ENCODE measurements at regions of chr11 and their contacts with region 1.

Region 1: GRCh38 chr11:75191330-75191717 is 40.4 kb downstream of the SLCO2B1 start:
- DNase-seq: no peak
- ATAC-seq: peak; percentile 73
- H3K4me3 ChIP-seq: no peak overlapping the region
- H3K27ac ChIP-seq: peak overlapping the region; percentile 63
- H3K4me1 ChIP-seq: peaks cover 26% of the 10 kb centered on the region
- H3K27me3 ChIP-seq: no peaks in the 10 kb centered on the region
- CTCF ChIP-seq: no peak
- EP300 ChIP-seq: no peak
- POLR2A ChIP-seq: no peak
- RAD21 ChIP-seq: no peak

Region 2: DNA sequence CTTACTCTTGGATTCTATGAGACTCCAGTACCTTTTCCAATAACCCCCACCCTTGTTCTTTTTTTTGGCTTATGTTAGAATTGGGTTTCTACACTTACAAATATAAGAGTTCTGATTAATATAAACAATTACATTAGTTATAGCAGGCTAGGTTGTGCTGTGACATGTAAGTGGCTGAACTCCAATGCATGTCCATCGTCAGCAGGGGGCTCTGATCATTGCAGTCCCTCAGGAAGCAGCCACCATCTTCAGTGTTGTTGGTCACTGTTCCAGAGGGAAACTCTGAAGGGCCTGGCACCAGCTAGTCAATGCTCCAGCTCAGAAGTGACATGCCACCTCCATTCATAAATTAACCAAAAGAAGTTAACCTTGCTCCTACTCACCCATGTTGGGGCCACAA is 703.4 kb before region 1 on chr11:
- CTCF ChIA-PET with region 1: no interaction called
- POLR2A ChIA-PET with region 1: no interaction called
- in situ Hi-C with region 1: no loop called
- intact Hi-C with region 1: no loop called
- DNase-seq: peak; percentile 54
- ATAC-seq: peak; percentile 94
- H3K4me3 ChIP-seq: no peak overlapping the region
- H3K27ac ChIP-seq: no peak overlapping the region
- H3K4me1 ChIP-seq: peaks cover 22% of the 10 kb centered on the region
- H3K27me3 ChIP-seq: no peaks in the 10 kb centered on the region
- CTCF ChIP-seq: peak; percentile 66
- EP300 ChIP-seq: no peak
- POLR2A ChIP-seq: no peak
- RAD21 ChIP-seq: 0 out of 2 replicates have a peak, but pooled peaks have one; percentile 40

Region 3: DNA sequence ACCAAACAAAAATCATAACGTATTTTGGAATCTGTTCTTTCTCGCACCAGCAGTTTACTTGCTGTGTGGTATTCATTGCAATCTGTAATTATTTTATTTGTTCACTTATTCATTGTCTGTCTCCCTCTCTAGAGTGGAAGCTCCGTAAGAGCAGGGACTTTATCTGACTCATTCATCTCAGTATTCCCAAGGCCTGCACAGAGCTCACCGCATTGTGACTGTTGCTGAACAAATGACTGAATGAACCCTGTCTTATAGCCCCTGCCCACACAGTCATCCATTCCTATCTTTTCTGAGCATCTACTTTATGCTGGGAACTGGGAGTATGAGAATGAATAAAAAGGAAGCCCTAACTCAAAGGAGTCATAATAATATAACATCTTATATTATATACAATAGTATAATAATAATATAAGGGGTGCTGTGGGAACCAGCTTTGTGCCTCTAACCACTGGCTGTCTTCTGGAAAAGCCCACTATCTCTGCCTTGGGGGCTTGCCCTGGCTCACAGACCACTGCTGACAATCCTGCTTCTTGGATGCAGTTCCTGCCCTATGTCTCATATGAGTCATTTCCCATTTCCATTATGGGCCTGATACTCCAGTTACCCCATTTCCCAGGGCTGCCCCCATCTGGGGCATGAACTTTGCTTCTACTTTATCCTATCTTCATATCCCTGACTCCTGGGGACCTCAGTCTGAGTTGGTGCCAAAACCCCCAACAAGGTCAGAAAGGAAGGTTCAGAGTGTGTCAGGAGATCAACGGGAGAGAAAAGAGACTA is 253.4 kb before region 1 on chr11:
- CTCF ChIA-PET with region 1: no interaction called
- POLR2A ChIA-PET with region 1: no interaction called
- in situ Hi-C with region 1: no loop called
- intact Hi-C with region 1: no loop called
- DNase-seq: no peak
- ATAC-seq: no peak
- H3K4me3 ChIP-seq: no peak overlapping the region
- H3K27ac ChIP-seq: no peak overlapping the region
- H3K4me1 ChIP-seq: no peaks in the 10 kb centered on the region
- H3K27me3 ChIP-seq: no peaks in the 10 kb centered on the region
- CTCF ChIP-seq: no peak
- EP300 ChIP-seq: no peak
- POLR2A ChIP-seq: no peak
- RAD21 ChIP-seq: no peak

Region 4: DNA sequence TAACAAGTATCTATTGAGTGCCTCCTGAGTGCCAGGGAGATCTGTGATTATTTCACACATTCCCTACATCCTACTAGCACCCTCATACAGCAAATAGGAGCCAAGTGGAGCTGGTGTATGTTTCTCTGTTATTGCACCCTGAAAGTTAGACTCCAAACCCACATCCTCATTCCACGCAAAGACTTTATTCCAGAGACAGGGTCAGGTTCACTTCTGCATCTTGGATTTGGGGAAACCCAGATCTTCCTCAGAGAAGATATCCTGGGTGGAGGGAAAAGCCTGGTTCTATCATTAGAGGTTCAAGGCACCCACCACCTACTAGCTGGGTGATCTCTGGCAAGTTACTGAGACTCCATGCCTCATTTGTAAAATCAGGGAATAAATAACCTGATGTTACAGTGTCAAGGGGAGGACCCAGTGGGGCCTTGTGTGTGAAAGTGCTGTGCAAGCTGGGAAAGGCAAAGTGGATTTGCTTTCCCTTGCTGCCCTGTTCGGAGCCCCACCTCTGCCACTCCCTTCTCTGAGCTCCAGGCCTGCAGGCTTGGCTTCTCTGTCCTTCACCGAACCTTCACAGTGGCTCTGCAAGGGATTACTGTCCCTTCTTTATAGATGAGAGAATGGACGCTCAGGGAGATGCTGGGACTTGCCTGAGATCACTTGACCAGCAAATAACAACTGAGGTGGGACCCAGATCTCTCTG is 41.4 kb before region 1 on chr11:
- CTCF ChIA-PET with region 1: no interaction called
- POLR2A ChIA-PET with region 1: no interaction called
- in situ Hi-C with region 1: no loop called
- intact Hi-C with region 1: no loop called
- DNase-seq: no peak
- ATAC-seq: no peak
- H3K4me3 ChIP-seq: no peak overlapping the region
- H3K27ac ChIP-seq: no peak overlapping the region
- H3K4me1 ChIP-seq: peaks cover 99% of the 10 kb centered on the region
- H3K27me3 ChIP-seq: no peaks in the 10 kb centered on the region
- CTCF ChIP-seq: no peak
- EP300 ChIP-seq: no peak
- POLR2A ChIP-seq: no peak
- RAD21 ChIP-seq: no peak

Region 5: GRCh38 chr11:76694664-76695063 is 1503.3 kb after region 1 on chr11:
- CTCF ChIA-PET with region 1: no interaction called
- POLR2A ChIA-PET with region 1: no interaction called
- in situ Hi-C with region 1: no loop called
- intact Hi-C with region 1: loop called (anchors 5 kb)
- DNase-seq: no peak
- ATAC-seq: no peak
- H3K4me3 ChIP-seq: no peak overlapping the region
- H3K27ac ChIP-seq: no peak overlapping the region
- H3K4me1 ChIP-seq: no peaks in the 10 kb centered on the region
- H3K27me3 ChIP-seq: peaks cover 4 to 23% of the 10 kb centered on the region in 2 experiments; a peak in 3 of 5 replicates
- CTCF ChIP-seq: no peak
- EP300 ChIP-seq: no peak
- POLR2A ChIP-seq: no peak
- RAD21 ChIP-seq: no peak

Measured in HepG2 (cell line).